Endothelial cell of umbilical vein (primary cell): ENCODE measurements at regions of chr20 and their contacts with region 1.

Region 1: GRCh38 chr20:431012-431904 is 23.2 kb downstream of the RBCK1 start:
- DNase-seq: peak; percentile 76
- H3K4me3 ChIP-seq: no peak overlapping the region
- H3K27ac ChIP-seq: no peak overlapping the region
- H3K4me1 ChIP-seq: no peaks in the 10 kb centered on the region
- H3K27me3 ChIP-seq: no peaks in the 10 kb centered on the region
- CTCF ChIP-seq: peak; percentile 76 to 86
- POLR2A ChIP-seq: no peak

Region 2: DNA sequence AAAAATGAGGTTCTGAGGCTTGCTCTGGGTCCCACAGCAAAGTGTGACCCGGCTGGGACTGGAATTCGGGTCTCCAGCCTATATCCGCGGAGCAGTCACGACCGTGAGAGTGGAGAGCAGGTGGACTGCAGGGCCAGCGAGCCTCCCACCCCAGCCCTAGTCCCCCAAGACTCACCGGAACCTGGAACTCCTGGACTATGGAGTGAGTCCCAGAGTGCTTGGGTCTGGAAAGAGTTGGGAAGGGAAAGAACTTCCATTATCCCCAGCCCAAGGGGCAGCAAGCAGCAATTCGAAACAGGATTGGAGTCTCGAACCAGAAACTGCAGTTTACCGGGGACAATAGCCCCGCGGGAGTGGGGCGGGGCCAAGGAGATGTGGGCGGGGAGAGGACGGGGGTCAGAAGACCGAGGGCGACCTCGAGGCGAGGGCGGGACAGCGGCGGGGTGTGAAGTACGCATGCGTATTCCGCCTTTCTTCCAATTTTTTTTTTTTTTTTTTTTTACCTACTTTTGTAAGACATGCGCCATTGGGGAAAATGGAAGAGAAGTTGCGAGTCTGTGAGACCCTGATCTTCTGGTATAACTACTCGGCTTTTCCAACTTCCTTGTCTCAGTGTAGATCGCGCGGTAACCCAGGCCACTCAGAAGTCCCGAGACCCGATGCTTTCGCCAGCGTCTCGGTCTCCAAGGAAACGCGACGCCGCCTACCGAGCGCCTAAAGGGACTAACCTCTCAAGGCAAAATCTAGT is 141.0 kb before region 1 on chr20 and contains the start of gene C20orf96:
- CTCF ChIA-PET with region 1: no interaction called
- POLR2A ChIA-PET with region 1: no interaction called
- dilution Hi-C with region 1: no loop called
- intact Hi-C with region 1: no loop called
- DNase-seq: peak; percentile 94
- H3K4me3 ChIP-seq: peak within 1 kb of the TSS; percentile 82 to 98 (median 87)
- H3K27ac ChIP-seq: peak within 1 kb of the TSS; percentile 54
- H3K4me1 ChIP-seq: peaks cover 27% of the 10 kb centered on the region
- H3K27me3 ChIP-seq: no peaks in the 10 kb centered on the region
- CTCF ChIP-seq: peak; percentile 22 to 62
- POLR2A ChIP-seq: peak; percentile 70
- total RNA-seq, gene C20orf96: 17.0 and 20.0 TPM in 2 replicates

Region 3: DNA sequence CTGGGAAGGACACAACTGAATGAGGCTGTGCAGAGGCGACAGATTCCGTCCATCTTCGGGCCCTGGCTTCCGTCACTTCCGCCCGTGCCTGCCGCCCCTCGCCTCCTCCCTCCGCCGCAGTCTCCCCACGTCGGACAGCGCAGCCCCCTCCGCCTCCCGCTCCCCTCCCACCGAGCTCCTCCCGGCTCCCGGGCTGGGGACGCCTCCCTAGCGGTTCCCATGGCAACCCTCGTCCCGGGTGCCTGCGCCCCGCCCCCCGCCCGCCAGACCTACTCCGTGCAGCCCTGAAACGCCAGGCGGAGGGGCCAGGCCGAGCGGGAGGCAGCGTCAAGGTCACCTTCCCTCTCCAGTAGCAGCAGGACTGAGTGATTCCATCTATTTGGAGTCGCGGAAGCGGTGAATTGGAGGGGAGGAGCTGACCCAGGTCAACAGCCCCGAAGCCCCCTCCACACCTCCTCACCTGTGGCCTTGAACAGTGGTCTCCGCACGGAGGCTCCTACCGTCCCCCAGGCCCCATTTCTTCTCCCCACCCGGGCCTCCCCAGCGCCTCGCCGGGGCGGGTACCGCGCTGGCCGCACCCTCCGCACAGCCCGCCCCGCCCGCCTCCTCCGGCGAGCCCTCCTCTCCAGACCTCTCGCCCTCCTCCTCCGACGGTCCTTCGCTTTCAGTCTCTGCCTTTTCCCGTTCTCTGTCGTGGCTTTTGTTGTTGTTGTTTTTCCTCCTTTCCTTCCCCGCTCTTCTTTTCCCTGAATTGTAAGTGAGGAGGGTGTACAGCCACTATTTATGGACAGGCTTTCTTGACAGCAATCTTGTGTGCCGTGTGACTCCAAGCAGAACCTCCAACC is 83.4 kb before region 1 on chr20:
- CTCF ChIA-PET with region 1: interaction called, 120 read pairs
- POLR2A ChIA-PET with region 1: no interaction called
- dilution Hi-C with region 1: no loop called
- intact Hi-C with region 1: no loop called
- DNase-seq: peak; percentile 89
- H3K4me3 ChIP-seq: peak overlapping the region; percentile 53 to 77 (median 54)
- H3K27ac ChIP-seq: peak overlapping the region; percentile 51
- H3K4me1 ChIP-seq: peaks cover 9% of the 10 kb centered on the region
- H3K27me3 ChIP-seq: no peaks in the 10 kb centered on the region
- CTCF ChIP-seq: no peak
- POLR2A ChIP-seq: peak; percentile 75

Region 4: DNA sequence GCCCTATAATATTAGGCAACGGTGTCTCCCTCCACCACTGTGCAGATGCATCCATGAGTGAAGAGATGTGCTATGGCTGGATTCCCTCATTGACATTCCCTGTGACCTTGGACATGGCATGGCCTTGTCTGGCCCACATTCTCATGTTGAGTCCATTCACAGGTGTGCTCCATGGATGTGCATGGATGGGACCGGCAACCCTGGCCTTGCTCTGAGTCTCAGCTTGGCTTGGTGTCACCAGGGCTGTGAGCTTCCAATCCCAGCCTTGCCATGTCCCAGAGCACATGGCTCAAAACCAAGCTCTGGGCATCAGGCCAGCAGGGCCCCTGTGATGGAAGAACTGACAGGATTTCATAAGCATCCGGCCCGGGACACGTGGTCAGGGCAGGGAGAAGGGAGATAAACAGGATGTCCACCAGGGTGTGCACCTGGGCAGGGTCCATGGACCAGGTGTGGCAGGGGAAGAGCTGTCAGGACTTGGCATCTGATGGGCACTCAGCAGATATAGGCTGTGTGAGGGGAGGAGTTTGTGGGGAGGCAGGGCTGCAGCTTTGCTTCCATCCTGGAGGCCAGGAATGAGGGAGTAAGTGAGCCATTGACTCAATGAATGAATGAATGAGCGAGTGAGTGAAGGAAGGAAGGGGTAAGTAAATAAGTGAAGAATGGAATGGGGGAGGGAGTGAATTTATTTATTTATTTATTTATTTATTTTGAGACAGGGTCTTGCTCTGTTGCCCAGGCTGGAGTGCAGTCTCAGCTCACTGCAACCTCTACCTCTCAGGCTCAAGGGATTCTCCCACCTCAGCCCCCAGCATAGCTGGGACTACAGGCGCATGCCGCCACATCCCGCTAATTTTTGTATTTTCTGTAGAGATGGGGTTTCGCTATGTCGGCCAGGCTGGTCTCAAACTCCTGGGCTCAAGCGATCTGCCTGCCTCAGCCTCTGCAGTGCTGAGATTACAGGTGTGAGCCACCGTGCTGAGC is 68.7 kb before region 1 on chr20:
- CTCF ChIA-PET with region 1: interaction called, 34 read pairs
- POLR2A ChIA-PET with region 1: no interaction called
- dilution Hi-C with region 1: no loop called
- intact Hi-C with region 1: loop called (anchors 2 kb)
- DNase-seq: peak; percentile 89
- H3K4me3 ChIP-seq: no peak overlapping the region
- H3K27ac ChIP-seq: no peak overlapping the region
- H3K4me1 ChIP-seq: peaks cover 7% of the 10 kb centered on the region
- H3K27me3 ChIP-seq: no peaks in the 10 kb centered on the region
- CTCF ChIP-seq: peak in 1 of 2 donors; percentile 39
- POLR2A ChIP-seq: no peak

Region 5: DNA sequence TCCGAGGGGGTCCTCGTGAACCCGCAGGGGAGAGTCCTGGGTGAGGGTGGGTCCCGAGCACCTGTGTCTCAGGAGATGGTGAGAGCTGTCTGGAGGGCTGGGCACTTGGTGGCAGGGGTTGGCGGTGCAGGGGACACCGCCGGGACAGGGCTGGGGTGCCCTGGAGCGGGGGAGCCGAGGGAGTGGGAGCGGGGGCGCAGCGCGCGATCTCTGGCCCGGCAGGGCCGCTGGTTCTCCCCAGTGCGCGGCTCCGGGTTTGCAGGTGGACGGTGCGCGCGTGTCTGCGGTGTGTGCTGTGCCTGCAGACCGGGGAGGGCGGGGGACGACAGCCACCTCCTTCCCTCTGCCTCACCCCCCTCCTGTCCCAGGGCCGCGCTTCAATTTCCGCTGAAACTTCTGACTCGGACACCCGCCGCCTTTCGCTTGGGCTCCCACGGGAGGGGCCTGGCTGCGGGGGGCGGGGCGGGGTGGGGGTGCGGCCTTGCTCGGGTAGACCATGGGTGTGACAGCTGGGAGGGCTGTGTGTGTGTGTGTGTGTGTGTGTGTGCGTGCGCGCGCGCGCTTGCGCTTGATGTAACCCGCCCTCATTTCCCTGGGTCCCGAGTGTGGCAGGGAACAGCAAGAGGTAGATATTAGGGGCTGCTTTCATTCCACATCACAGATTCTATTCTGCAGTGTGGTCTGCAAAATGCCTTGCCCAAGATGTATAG is 49.5 kb before region 1 on chr20:
- CTCF ChIA-PET with region 1: interaction called, 10 read pairs
- POLR2A ChIA-PET with region 1: no interaction called
- dilution Hi-C with region 1: no loop called
- intact Hi-C with region 1: no loop called
- DNase-seq: peak; percentile 48
- H3K4me3 ChIP-seq: peak overlapping the region; percentile 62 to 92 (median 88)
- H3K27ac ChIP-seq: no peak overlapping the region
- H3K4me1 ChIP-seq: peaks cover 6% of the 10 kb centered on the region
- H3K27me3 ChIP-seq: no peaks in the 10 kb centered on the region
- CTCF ChIP-seq: no peak
- POLR2A ChIP-seq: peak; percentile 36

Region 6: GRCh38 chr20:414161-414560 is 17.1 kb before region 1 on chr20:
- CTCF ChIA-PET with region 1: interaction called, 23 read pairs
- POLR2A ChIA-PET with region 1: no interaction called
- dilution Hi-C with region 1: no loop called
- intact Hi-C with region 1: no loop called
- DNase-seq: no peak
- H3K4me3 ChIP-seq: no peak overlapping the region
- H3K27ac ChIP-seq: no peak overlapping the region
- H3K4me1 ChIP-seq: peaks cover 8% of the 10 kb centered on the region
- H3K27me3 ChIP-seq: no peaks in the 10 kb centered on the region
- CTCF ChIP-seq: no peak
- POLR2A ChIP-seq: no peak

Region 7: DNA sequence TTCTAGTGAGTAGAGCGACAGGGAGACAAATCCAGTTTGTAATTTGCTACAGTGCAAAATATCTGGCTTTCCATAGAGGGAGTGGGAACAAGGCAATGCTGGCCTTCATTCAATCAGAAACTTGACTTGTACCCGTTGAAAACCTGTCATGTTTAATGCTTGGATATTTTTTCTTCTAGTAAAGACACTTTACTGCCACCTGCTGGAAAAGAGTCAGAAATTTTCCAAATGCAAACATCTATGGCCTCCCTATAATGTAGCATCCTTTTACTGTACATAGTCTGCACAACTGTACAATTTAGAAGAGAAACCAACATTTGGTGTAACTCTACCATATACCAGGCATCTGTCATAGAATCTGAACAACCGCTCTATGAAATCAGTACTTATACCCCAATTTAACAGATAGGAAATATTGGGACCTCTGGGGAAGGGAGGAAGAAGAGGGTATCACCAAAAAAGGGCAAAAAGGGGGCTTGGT is 47.7 kb after region 1 on chr20:
- CTCF ChIA-PET with region 1: interaction called, 11 read pairs
- POLR2A ChIA-PET with region 1: no interaction called
- dilution Hi-C with region 1: no loop called
- intact Hi-C with region 1: loop called (anchors 1 kb)
- DNase-seq: peak; percentile 70
- H3K4me3 ChIP-seq: no peak overlapping the region
- H3K27ac ChIP-seq: no peak overlapping the region
- H3K4me1 ChIP-seq: peaks cover 7% of the 10 kb centered on the region
- H3K27me3 ChIP-seq: no peaks in the 10 kb centered on the region
- CTCF ChIP-seq: peak; percentile 21 to 40
- POLR2A ChIP-seq: no peak

Region 8: DNA sequence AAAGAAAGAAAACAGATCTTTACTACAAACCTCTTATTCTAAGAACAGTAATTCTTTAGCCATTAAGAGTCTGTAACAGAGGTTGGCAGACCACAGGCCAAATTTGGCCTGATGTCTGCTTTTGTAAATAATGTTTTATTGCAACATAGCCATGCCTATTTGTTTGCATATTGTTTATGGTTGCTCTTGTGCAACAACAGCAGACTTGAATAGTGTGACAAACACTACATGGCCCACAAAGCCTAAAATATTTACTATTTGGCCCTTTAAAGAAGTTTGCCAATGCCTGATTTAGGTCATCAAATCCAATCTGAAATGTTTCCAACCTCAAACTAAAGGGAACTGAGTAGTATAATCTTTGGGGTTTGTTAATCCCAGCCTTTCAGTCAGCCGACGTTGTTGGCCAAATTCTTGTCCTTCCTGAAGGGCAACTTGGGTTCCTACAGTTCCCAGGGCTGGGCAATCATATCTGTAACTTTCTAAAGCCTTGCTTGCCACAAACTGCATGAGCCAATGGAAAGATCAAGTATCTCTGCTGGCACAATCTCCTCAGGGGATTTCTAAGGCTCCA is 65.0 kb after region 1 on chr20:
- CTCF ChIA-PET with region 1: no interaction called
- POLR2A ChIA-PET with region 1: no interaction called
- dilution Hi-C with region 1: no loop called
- intact Hi-C with region 1: no loop called
- DNase-seq: no peak
- H3K4me3 ChIP-seq: no peak overlapping the region
- H3K27ac ChIP-seq: no peak overlapping the region
- H3K4me1 ChIP-seq: no peaks in the 10 kb centered on the region
- H3K27me3 ChIP-seq: no peaks in the 10 kb centered on the region
- CTCF ChIP-seq: no peak
- POLR2A ChIP-seq: no peak

Region 9: DNA sequence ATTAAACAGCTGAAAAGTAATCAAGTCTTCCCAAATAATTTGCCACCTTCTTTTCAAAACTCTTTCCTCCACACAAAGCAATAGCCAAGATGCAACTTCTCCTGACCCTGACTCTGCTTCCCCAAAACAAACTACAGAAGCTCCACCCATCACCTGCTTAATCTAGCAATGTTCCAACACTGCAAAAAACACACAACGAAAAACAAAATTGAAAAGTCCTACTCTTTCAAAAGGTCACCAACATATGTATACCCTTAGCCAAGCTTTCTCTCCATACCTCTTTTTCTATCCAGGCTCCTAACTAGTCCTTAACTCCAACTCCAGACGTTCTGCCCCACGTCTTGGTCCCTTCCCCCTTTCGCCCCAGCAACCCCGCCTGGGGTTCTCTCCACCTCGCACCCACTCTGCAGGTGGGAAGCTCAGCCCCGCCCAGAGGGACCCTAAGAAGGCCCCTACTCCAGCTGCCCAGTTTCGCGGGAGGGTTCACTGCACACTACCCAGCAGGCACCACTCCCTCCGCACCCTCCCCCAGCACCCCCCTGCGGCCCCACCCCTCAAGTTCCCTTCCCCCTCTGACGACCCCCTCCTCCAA is 111.6 kb after region 1 on chr20:
- CTCF ChIA-PET with region 1: no interaction called
- POLR2A ChIA-PET with region 1: no interaction called
- dilution Hi-C with region 1: no loop called
- intact Hi-C with region 1: no loop called
- DNase-seq: no peak
- H3K4me3 ChIP-seq: peak overlapping the region; percentile 76 to 100 (median 93)
- H3K27ac ChIP-seq: peak overlapping the region; percentile 9
- H3K4me1 ChIP-seq: peaks cover 28% of the 10 kb centered on the region
- H3K27me3 ChIP-seq: peaks cover 6 to 8% of the 10 kb centered on the region in 2 experiments
- CTCF ChIP-seq: no peak
- POLR2A ChIP-seq: no peak